ENCODE measurements at regions of chr6 and their contacts with region 1.

Region 1: GRCh38 chr6:32885698-32886286 is 31.8 kb downstream of the PSMB9 start:
- DNase-seq: peak; percentile 74
- H3K4me3 Mint-ChIP-seq: no peak overlapping the region
- H3K27ac Mint-ChIP-seq: no peak overlapping the region
- H3K4me1 Mint-ChIP-seq: peaks cover 11% of the 10 kb centered on the region
- H3K27me3 Mint-ChIP-seq: no peaks in the 10 kb centered on the region
- CTCF ChIP-seq: peak; percentile 56

Region 2: GRCh38 chr6:32627831-32628230 is 258.0 kb before region 1 on chr6:
- CTCF ChIA-PET with region 1: no interaction called
- POLR2A ChIA-PET with region 1: no interaction called
- intact Hi-C with region 1: no loop called
- DNase-seq: peak; percentile 34
- H3K4me3 Mint-ChIP-seq: no peak overlapping the region
- H3K27ac Mint-ChIP-seq: no peak overlapping the region
- H3K4me1 Mint-ChIP-seq: peaks cover 4% of the 10 kb centered on the region
- H3K27me3 Mint-ChIP-seq: no peaks in the 10 kb centered on the region
- CTCF ChIP-seq: no peak

Region 3: DNA sequence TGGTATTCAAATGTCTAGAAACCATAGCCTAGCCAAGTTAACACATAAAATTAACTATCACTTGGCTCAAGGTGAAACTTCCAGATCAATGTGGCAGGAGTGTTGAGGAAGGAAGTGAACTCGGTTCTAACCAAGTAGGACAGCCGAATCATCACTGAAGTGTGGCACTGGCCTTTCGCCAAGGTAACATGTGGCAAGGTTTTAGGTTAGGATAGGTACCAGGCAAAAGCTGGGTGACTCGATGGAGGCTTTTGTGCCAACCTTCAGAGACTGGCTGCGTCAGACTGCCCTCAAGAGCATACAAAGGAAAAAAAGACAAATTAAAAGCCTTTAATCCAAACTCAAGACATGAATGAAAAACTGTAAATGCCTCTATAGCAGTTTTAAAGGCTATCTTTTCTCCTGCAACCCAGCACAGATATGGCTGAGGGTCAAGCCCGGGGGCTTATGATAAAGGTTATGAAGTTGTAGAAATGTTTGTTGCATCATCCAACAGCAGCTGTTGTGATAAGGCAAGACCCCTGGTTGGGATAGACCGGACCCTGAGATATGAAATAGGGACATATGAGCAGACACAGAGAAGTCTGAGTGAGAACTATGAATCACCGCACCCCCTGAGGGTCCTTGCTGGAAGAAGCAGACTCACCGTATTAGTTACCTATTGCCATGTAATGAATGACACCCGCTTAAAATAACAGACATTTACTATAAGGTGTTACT is 19.9 kb before region 1 on chr6:
- CTCF ChIA-PET with region 1: no interaction called
- POLR2A ChIA-PET with region 1: no interaction called
- intact Hi-C with region 1: no loop called
- DNase-seq: no peak
- H3K4me3 Mint-ChIP-seq: no peak overlapping the region
- H3K27ac Mint-ChIP-seq: no peak overlapping the region
- H3K4me1 Mint-ChIP-seq: peaks cover 7% of the 10 kb centered on the region
- H3K27me3 Mint-ChIP-seq: peaks cover 18% of the 10 kb centered on the region
- CTCF ChIP-seq: no peak

Region 4: DNA sequence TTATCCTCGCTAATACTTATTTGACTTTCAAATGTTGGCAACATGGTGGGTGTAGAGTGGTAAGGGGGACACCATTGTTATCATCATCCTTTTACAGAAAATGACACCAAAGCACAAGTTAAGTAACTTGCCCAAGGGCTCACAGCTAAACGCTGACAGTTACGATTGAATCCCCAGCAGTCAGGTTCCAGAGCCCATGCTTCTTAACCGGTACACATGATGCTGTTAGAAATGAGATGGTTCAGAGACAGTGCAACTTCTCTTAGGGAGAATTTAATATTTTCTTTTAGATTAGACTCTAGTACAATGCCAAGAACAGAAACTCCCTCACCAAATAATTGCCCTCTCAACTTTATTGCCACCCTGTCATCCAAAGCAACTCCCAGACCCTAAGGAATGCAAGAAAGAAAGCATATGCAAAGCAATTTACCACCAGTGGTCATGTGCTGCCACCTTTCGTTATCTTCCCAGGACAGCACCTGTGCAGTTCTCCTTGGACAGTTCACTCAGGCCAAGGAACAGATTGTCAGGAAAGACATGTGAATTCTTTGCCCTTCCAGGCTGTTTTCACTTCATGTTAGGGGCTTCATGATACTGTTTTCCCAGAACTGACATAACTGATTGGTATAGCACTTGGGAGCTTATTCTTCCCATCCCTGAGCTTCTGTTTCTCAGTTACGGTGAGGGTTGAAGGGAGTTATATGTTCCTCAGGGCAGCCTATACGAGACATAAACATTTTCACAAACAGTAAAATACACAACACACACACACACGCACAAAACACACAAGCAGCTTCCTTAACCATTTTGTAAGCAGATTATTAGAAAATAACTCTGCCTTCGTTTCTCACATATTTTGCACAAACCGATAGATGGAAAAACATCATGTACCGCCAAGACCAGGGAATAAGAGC is 62.0 kb after region 1 on chr6:
- CTCF ChIA-PET with region 1: interaction called, 23 read pairs
- POLR2A ChIA-PET with region 1: no interaction called
- intact Hi-C with region 1: loop called (anchors 1 kb)
- DNase-seq: peak; percentile 69
- H3K4me3 Mint-ChIP-seq: no peak overlapping the region
- H3K27ac Mint-ChIP-seq: no peak overlapping the region
- H3K4me1 Mint-ChIP-seq: peaks cover 5% of the 10 kb centered on the region
- H3K27me3 Mint-ChIP-seq: peaks cover 3% of the 10 kb centered on the region
- CTCF ChIP-seq: peak; percentile 75